ENCODE measurements at regions of chr17 and their contacts with region 1.

Region 1: DNA sequence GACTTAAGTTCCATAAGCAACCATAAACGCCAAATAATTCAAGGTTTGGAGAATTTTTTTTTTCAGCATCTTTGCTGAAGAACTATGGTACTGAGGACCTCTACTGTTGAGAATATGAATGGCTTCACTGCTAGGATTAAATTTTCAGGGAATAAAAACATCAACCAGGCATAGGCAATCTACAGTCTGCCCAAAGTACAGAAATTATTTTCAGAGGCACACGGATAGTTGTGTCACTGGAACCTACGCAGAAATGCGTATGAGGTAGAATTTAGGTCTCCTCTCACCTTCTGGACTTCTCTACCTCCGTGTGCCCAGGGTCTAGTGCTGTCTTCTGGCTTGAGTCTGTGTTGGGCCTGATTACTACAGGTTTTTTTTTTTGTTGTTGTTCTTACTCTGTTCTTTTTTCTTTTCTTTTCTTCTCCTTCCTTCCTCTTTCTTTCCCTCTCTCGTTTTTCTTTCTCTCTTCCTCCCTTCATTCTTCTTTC is 39.7 kb downstream of the NACA2 start:
- DNase-seq: no peak
- H3K4me3 ChIP-seq: no peak overlapping the region
- H3K27ac ChIP-seq: no peak overlapping the region
- H3K4me1 ChIP-seq: no peaks in the 10 kb centered on the region
- H3K27me3 ChIP-seq: peaks cover 69% of the 10 kb centered on the region
- CTCF ChIP-seq: peak; percentile 58 to 73 (median 68)
- EP300 ChIP-seq: no peak
- POLR2A ChIP-seq: no peak

Region 2: GRCh38 chr17:60743799-60744198 is 807.5 kb before region 1 on chr17:
- in situ Hi-C with region 1: loop called in 1 of 4 experiments (anchors 25 kb)
- intact Hi-C with region 1: no loop called
- DNase-seq: no peak
- H3K4me3 ChIP-seq: no peak overlapping the region
- H3K27ac ChIP-seq: peak overlapping the region; percentile 10 to 40 (median 18)
- H3K4me1 ChIP-seq: peaks cover 0 to 19% (median 3%) of the 10 kb centered on the region in 4 donors
- H3K27me3 ChIP-seq: no peaks in the 10 kb centered on the region
- CTCF ChIP-seq: no peak
- EP300 ChIP-seq: no peak
- POLR2A ChIP-seq: no peak

Region 3: GRCh38 chr17:61412143-61412859 is 139.0 kb before region 1 on chr17:
- in situ Hi-C with region 1: no loop called
- intact Hi-C with region 1: loop called (anchors 5 kb)
- DNase-seq: peak; percentile 83
- H3K4me3 ChIP-seq: peak overlapping the region; percentile 39 to 57 (median 50)
- H3K27ac ChIP-seq: peak overlapping the region; percentile 59 to 77 (median 70)
- H3K4me1 ChIP-seq: peaks cover 13 to 50% (median 42%) of the 10 kb centered on the region in 4 donors
- H3K27me3 ChIP-seq: peaks cover 60% of the 10 kb centered on the region
- CTCF ChIP-seq: peak; percentile 97 to 99 (median 98)
- EP300 ChIP-seq: no peak
- POLR2A ChIP-seq: no peak

Region 4: DNA sequence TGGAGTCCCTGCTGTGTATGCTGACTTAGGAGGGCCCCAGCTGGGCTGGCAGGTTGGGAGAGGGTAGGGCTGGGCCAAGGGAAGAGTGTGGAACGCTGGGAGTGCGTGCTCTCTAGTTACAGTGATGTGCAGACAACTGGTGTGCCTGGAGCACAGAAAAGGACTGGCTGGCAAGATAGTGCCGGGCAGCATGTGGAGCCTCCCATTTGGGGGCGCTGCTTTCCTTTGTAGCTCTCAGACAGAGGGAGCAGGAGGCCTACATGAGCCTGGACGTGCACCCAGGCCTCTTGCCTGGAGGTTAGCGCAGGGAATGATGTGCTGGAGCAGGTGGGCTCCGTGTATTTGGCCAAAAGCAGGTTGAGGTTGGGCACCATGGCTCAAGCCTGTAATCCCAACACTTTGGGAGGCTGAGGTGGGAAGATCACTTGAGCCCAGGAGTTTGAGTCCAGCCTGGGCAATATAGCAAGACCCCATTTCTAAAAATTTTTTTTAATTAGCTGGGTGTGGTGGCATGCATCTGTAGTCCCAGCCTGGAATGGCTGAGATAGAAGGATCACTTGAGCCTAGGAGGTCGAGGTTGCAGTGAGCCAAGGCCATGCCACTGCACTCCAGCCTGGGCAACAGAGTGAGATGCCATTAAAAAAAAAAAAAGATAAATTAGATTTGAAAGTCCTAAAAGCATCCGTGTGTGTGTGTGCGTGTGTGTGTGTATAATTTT is 125.1 kb before region 1 on chr17:
- in situ Hi-C with region 1: loop called in 3 of 4 experiments (anchors 10 kb)
- intact Hi-C with region 1: no loop called
- DNase-seq: no peak
- H3K4me3 ChIP-seq: no peak overlapping the region
- H3K27ac ChIP-seq: no peak overlapping the region
- H3K4me1 ChIP-seq: no peaks in the 10 kb centered on the region
- H3K27me3 ChIP-seq: peaks cover 47% of the 10 kb centered on the region
- CTCF ChIP-seq: peak in 2 of 5 experiments; percentile 9 to 16
- EP300 ChIP-seq: no peak
- POLR2A ChIP-seq: no peak